Dorsolateral prefrontal cortex (tissue), 120 donors: ENCODE measurements at regions of chr9 and their contacts with region 1.

Region 1: DNA sequence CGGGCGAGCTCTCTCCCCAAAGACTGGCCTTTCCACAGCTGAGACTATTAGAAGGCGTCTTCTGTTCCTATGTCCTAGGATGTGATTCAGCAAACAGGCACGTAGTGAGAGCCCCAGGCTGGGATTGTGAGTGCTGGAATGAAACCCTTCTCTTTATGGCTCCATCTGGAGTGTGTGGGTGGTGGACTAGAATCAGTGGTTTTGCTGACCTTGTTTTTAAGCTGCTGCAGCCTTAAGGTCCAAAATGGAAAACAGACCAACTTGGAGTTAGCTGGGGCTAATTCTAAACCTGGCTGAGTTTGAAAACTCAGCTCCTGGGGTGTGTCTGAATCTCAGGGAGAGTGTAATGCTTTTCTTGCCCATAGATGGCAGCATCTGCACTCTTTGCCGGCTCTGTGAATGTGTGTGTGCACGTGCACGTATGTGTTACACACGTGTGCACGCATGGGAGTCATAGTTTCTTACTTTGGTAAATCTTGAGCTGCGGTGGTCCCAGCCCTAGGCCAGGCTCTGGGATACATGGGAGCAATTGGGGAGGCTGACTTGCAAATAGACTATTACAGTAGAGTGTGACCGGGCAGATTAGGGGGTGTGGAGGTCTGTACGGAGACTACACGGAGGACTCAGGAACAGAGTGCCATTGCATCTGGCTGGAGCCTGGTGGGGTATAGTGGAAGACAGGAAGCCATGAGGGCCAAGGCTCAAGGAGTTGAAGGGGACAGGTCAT is 10.7 kb downstream of the GSN start:
- DNase-seq: peak in 4 of 10 donors; percentile 48 to 82 (median 66)
- H3K4me3 ChIP-seq: peak overlapping the region in 9 of 59 donors; percentile 2 to 24 (median 13)
- H3K27ac ChIP-seq: peak overlapping the region; percentile 51 to 100 (median 98)
- H3K27me3 ChIP-seq: no peaks in the 10 kb centered on the region
- CTCF ChIP-seq: peak; percentile 75 to 93 (median 87)

Region 2: DNA sequence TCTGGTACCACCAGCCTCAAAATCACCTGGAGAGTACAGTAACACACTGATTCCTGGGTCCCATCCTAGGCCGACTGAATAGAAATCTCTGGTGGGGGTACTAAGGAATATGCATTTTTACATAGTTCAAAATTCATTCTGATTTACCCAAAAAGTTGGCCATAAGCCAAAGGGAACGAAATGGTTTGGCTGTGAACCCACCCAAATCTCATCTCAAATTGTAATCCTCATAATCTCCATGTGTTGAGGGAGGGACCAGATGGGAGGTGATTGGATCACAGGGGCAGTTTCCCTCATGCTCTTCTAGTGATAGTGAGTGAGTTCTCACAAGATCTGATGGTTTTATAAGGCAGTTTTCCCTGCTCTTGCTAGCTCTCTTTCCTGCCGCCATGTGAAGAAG is 595.6 kb before region 1 on chr9:
- intact Hi-C with region 1: no loop called
- DNase-seq: no peak
- H3K4me3 ChIP-seq: no peak overlapping the region
- H3K27ac ChIP-seq: peak overlapping the region in 27 of 59 donors; percentile 0 to 87 (median 58)
- H3K27me3 ChIP-seq: no peaks in the 10 kb centered on the region
- CTCF ChIP-seq: no peak

Region 3: GRCh38 chr9:121376214-121376830 is 97.6 kb after region 1 on chr9:
- intact Hi-C with region 1: loop called (anchors 5 kb)
- DNase-seq: no peak
- H3K4me3 ChIP-seq: no peak overlapping the region
- H3K27ac ChIP-seq: no peak overlapping the region
- H3K27me3 ChIP-seq: no peaks in the 10 kb centered on the region
- CTCF ChIP-seq: peak in 55 of 56 donors; percentile 36 to 81 (median 61)